Mucosa of descending colon (tissue), 3 donors: ENCODE measurements at regions of chr13 and their contacts with region 1.

Region 1: DNA sequence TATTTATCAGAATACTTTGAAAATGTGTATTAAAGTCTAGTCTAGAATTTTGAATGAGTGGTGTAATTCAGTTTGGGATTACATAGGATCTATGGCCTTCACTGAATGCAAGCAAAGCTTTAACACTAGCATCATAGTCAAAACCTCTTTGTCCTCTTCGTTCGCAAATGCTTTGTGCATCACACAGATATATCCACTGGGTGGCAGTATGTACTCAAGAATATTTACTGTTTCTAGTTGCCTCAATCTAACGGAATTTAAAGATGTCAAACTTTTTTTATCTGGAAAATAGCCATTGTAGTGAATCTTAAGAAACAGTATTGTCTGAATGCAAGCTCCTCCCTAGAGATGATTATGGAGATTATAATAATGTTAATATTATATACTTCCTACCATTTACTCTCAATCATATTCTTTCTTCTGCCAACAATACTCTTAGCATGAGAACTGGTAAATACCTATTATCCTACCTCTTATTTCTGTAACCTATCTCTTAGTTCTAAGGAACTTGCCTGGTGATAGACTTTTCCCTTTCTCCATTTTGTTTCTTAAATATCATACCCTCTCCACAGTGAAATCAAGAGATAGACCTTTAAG is 25.8 kb downstream of the LACC1 start:
- DNase-seq: peak in 1 of 3 donors; percentile 67
- ATAC-seq: peak; percentile 73
- H3K4me3 ChIP-seq: no peak overlapping the region
- H3K4me1 ChIP-seq: peaks cover 7% of the 10 kb centered on the region
- CTCF ChIP-seq: peak; percentile 72

Region 2: DNA sequence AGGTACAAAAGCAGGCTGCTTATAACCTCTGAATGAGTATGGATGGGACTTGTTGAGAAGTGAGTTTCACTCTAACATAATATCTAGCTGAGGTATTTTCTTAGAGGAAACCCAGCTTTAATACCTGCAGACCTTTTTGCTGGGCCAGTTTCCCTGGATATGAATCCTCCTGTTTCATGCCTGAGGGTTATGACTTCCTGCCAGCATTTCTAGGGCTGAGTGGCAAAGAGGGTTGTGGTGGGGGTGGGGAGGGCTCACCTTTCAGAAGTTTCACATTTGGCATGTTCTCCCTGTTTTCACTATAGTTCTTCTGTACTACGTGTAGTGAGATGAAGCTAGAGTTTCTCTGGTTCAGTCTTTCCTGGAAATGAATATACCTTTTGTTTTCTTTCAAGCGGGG is 47.8 kb after region 1 on chr13:
- intact Hi-C with region 1: no loop called
- DNase-seq: no peak
- ATAC-seq: no peak
- H3K4me3 ChIP-seq: no peak overlapping the region
- H3K4me1 ChIP-seq: no peaks in the 10 kb centered on the region
- CTCF ChIP-seq: no peak

Region 3: GRCh38 chr13:44050450-44051063 is 145.0 kb after region 1 on chr13:
- intact Hi-C with region 1: loop called (anchors 5 to 10 kb)
- DNase-seq: peak in 1 of 3 donors; percentile 43
- ATAC-seq: peak; percentile 40
- H3K4me3 ChIP-seq: no peak overlapping the region
- H3K4me1 ChIP-seq: peaks cover 9% of the 10 kb centered on the region
- CTCF ChIP-seq: peak; percentile 45

Region 4: GRCh38 chr13:44435142-44435982 is 529.8 kb after region 1 on chr13:
- intact Hi-C with region 1: loop called in 1 of 2 experiments (anchors 5 kb)
- DNase-seq: peak; percentile 95 to 99 (median 95)
- ATAC-seq: peak; percentile 84
- H3K4me3 ChIP-seq: peak overlapping the region; percentile 40
- H3K4me1 ChIP-seq: peaks cover 20% of the 10 kb centered on the region
- CTCF ChIP-seq: no peak

Region 5: DNA sequence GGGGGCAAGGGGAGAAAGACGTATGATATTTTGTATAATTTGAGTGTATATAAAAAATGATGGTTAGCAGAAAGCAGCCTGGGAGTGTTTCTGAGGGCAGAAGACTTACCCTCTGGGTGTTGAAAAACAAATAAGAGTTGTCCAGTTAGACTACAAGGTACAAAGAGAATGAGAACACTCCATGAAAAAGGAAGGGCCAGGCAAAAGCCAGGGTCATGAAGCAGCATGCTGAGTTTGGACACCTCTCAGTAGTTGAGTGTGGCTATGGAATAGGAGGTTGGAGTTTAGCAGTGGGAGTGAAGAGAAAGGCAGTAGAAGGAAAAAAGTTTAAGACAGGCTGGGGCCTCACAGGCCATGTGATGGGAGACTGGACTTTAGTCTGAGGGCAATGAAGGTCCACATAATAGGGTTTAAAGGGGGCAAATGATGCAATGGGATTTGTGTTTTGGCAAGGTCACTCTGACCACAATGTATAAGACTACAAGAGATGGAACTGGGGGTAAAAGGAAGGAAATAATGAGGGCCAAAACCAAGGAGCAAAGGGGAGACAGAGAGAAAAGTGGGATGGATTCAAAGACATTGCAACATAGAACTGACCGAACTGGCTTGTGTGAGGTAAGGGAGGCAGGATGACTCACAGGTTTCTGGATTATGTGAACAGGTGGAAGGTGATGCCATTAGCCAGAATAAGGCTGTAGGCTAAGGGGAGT is 544.6 kb after region 1 on chr13:
- intact Hi-C with region 1: loop called in 1 of 2 experiments (anchors 5 kb)
- DNase-seq: no peak
- ATAC-seq: peak; percentile 64
- H3K4me3 ChIP-seq: no peak overlapping the region
- H3K4me1 ChIP-seq: no peaks in the 10 kb centered on the region
- CTCF ChIP-seq: no peak

Region 6: DNA sequence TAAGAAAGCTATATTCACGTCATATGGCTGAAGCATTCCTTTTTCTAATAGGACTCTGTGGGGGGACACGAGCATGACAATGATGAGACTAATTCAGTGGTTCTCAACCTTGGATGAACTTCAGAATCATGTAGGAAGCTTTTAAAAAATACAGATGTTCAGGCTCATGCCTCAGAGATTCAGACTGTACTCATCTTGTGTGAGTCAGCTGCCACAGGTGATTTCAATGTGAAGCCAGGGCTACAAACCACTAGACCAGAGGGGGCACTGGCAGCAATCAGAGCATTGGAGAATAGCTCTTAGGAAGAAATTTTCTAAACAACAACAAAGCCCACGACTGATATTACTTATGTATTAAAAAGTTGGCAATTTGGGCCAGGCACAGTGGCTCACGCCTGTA is 559.8 kb after region 1 on chr13:
- intact Hi-C with region 1: loop called (anchors 10 kb)
- DNase-seq: no peak
- ATAC-seq: no peak
- H3K4me3 ChIP-seq: no peak overlapping the region
- H3K4me1 ChIP-seq: no peaks in the 10 kb centered on the region
- CTCF ChIP-seq: no peak

Region 7: GRCh38 chr13:44470638-44471562 is 565.4 kb after region 1 on chr13:
- intact Hi-C with region 1: loop called (anchors 10 kb)
- DNase-seq: no peak
- ATAC-seq: no peak
- H3K4me3 ChIP-seq: no peak overlapping the region
- H3K4me1 ChIP-seq: no peaks in the 10 kb centered on the region
- CTCF ChIP-seq: no peak